OCI-LY7 (cell line): ENCODE measurements at regions of chr2 and their contacts with region 1.

Region 1: GRCh38 chr2:52794581-52794980 is 973.0 kb upstream of the CHAC2 start:
- DNase-seq: no peak
- H3K4me3 ChIP-seq: no peak overlapping the region
- H3K27ac ChIP-seq: no peak overlapping the region
- H3K4me1 ChIP-seq: no peaks in the 10 kb centered on the region
- CTCF ChIP-seq: no peak

Region 2: GRCh38 chr2:52210161-52210560 is 584.4 kb before region 1 on chr2:
- CTCF ChIA-PET with region 1: no interaction called
- POLR2A ChIA-PET with region 1: no interaction called
- intact Hi-C with region 1: loop called (anchors 10 kb)
- DNase-seq: no peak
- H3K4me3 ChIP-seq: no peak overlapping the region
- H3K27ac ChIP-seq: no peak overlapping the region
- H3K4me1 ChIP-seq: no peaks in the 10 kb centered on the region
- CTCF ChIP-seq: no peak